Caco-2 (cell line): ENCODE measurements at regions of chr13 and their contacts with region 1.

Region 1: DNA sequence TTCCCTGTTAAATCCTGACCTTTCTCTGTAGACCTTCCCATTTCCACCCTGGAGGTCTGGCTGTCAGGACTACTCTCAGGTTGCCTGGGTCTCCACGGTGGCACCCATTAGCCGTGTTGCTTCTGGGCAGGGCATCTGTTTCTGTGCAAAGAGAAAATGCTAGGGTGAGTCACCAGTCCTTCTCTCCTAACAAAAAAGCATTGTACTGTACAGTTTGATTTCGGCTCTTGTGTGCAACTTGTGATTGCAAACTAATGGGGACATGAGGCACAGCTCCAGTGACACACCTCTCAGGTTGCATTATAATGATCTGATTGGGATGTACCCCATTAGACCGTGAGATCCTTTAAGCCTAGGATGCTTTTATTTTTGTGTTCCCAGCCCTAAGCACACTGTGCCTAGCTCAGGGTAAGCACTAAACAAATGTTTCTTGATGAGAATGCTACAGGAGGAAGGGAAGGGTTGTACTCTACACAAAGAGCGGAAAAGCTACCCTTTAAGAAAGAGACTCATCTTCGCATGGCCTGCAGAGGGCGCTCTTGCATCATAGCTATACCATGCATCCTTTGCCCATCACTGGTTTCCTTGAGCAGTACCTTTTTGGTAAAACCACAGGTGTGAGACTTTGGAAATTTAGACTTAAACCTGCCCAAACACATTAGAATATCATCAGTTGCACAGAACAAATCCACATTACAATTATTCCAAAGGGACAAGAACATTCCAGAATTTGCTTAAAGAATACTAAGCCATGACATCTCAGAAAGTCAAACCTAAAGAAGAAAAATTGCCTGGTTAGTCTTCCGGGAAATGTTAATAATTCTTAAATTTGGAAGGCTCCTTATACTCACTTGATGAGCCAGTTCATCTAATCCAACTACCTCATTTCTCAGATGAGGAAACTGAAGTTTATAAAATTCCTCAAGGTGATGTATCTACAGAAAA is 20.3 kb upstream of the TRIM13 start:
- DNase-seq: peak; percentile 56 to 71
- H3K4me3 ChIP-seq: no peak overlapping the region
- H3K4me3 Mint-ChIP-seq: no peak overlapping the region
- H3K27ac Mint-ChIP-seq: no peak overlapping the region
- H3K4me1 ChIP-seq: peaks cover 10% of the 10 kb centered on the region; the same call in 1 of the 2 replicates
- H3K4me1 Mint-ChIP-seq: peaks cover 18% of the 10 kb centered on the region
- H3K27me3 ChIP-seq: no peaks in the 10 kb centered on the region
- H3K27me3 Mint-ChIP-seq: no peaks in the 10 kb centered on the region
- CTCF ChIP-seq: peak; percentile 93 to 94

Region 2: GRCh38 chr13:49669735-49670309 is 306.8 kb before region 1 on chr13:
- CTCF ChIA-PET with region 1: no interaction called
- POLR2A ChIA-PET with region 1: no interaction called
- intact Hi-C with region 1: loop called (anchors 5 kb)
- DNase-seq: peak; percentile 54 to 72
- H3K4me3 ChIP-seq: no peak overlapping the region
- H3K4me3 Mint-ChIP-seq: no peak overlapping the region
- H3K27ac Mint-ChIP-seq: no peak overlapping the region
- H3K4me1 ChIP-seq: no peaks in the 10 kb centered on the region
- H3K4me1 Mint-ChIP-seq: no peaks in the 10 kb centered on the region
- H3K27me3 ChIP-seq: no peaks in the 10 kb centered on the region
- H3K27me3 Mint-ChIP-seq: no peaks in the 10 kb centered on the region
- CTCF ChIP-seq: peak; percentile 63 to 75

Region 3: DNA sequence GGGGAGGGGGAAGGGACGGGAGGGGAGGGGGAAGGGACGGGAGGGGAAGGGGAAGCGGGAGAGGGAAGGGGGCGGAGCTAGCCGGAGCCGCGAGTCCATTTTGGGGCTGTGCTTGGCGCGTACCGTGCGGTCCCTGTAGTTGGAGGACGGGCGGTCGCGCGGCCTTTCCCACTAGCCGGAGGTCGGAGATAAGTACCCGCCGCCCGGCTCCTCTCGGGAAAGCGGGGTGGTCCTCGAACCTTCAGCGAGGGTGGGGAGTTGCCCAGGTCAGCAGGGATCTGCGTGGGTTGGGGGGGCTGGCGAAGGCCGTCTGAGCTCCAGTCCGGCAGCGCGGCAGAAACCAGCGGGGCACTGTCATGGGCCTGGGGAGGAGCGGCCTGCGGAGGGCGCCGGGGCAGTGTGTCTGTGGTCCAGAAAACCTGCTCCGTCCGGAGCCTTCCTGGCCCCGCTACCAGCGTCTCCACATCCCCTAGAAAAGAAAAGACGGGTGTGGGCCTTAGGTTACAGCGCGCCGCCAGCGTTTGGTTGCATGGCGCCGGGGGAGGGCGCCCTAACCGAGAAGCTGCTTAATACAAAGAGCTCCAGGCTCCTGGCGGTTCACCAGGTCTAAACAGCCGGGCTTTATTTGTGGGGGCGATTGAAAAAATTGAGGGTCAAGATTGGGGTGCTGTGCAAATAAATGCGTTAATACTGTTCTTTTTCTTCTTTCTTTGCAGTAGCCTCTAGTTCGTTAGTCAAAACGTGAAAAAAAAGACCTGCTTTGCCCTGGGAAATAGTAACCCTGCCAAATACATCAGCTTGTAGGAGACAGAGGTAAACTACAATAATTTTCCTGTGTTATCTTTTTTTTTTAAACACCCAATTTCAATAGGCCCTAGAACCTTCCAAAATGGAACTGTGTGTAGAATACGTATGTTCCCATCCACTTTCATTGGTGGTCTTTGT is 20.6 kb after region 1 on chr13 and contains the start of gene TRIM13:
- CTCF ChIA-PET with region 1: interaction called, 17 read pairs
- POLR2A ChIA-PET with region 1: interaction called, 3 read pairs
- intact Hi-C with region 1: no loop called
- DNase-seq: peak; percentile 91
- H3K4me3 ChIP-seq: peak within 1 kb of the TSS; percentile 77
- H3K4me3 Mint-ChIP-seq: peak within 1 kb of the TSS; percentile 92
- H3K27ac Mint-ChIP-seq: peak within 1 kb of the TSS; percentile 91
- H3K4me1 ChIP-seq: peaks cover 29% of the 10 kb centered on the region
- H3K4me1 Mint-ChIP-seq: peaks cover 9% of the 10 kb centered on the region
- H3K27me3 ChIP-seq: no peaks in the 10 kb centered on the region
- H3K27me3 Mint-ChIP-seq: no peaks in the 10 kb centered on the region
- CTCF ChIP-seq: peak; percentile 79 to 93
- total RNA-seq, gene TRIM13: 16.5 and 21.0 TPM in 2 replicates

Region 4: GRCh38 chr13:50911937-50912795 is 935.6 kb after region 1 on chr13:
- CTCF ChIA-PET with region 1: interaction called, 9 read pairs
- POLR2A ChIA-PET with region 1: no interaction called
- intact Hi-C with region 1: loop called (anchors 1 kb)
- DNase-seq: peak; percentile 87 to 89
- H3K4me3 ChIP-seq: no peak overlapping the region
- H3K4me3 Mint-ChIP-seq: peak overlapping the region; percentile 55
- H3K27ac Mint-ChIP-seq: peak overlapping the region; percentile 55
- H3K4me1 ChIP-seq: peaks cover 13% of the 10 kb centered on the region
- H3K4me1 Mint-ChIP-seq: peaks cover 25% of the 10 kb centered on the region
- H3K27me3 ChIP-seq: no peaks in the 10 kb centered on the region
- H3K27me3 Mint-ChIP-seq: no peaks in the 10 kb centered on the region
- CTCF ChIP-seq: peak; percentile 88 to 92